PC-9 (cell line): ENCODE measurements at regions of chr14 and their contacts with region 1.

Region 1: DNA sequence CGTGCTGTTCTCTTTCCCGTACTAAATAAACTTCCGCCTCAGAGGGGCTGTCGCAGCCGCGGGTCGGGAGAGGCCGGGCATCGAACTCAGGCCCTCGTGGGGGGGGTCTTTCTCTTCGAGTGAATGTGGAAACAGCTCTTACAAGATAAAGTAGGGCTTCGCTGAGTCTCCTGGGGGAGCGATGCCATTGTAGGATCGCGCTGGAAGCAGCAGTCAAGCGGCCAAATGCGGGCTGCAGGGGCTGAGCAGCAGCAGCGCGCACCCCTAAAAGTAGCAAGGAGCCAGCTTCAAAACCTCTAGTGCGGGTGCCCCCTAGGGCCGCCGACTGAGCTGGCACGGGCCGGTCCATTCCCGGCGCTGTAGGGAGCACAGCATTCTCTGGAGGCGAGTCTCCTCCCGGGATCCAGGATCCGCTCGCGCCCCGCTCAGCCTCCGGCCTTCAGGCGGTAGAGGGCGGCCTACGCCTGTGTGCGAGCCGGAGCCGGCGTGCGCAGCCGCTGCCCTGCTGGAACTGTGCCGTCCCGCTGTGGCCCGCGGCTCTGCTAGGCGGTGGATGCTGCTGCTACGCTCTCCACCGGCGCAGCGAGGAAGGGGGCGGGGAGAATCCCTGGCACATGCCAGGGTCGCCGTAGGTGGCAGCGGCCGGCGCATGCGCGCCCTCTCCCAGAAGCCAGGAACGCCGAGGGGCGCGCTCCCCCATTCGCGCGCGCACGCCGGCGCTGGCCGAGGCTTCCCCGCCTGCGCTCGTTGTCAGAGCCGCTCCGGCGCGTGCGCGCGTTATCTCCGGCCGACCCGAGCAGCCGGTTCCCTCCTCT is at the start of gene FUT8:
- DNase-seq: peak; percentile 89 to 99
- H3K4me3 ChIP-seq: peak within 1 kb of the TSS; percentile 97
- H3K27ac ChIP-seq: peak within 1 kb of the TSS; percentile 90
- H3K4me1 ChIP-seq: peaks cover 40% of the 10 kb centered on the region
- H3K27me3 ChIP-seq: no peaks in the 10 kb centered on the region
- CTCF ChIP-seq: peak; percentile 63
- total RNA-seq, gene FUT8: 134 and 135 TPM in 2 replicates

Region 2: DNA sequence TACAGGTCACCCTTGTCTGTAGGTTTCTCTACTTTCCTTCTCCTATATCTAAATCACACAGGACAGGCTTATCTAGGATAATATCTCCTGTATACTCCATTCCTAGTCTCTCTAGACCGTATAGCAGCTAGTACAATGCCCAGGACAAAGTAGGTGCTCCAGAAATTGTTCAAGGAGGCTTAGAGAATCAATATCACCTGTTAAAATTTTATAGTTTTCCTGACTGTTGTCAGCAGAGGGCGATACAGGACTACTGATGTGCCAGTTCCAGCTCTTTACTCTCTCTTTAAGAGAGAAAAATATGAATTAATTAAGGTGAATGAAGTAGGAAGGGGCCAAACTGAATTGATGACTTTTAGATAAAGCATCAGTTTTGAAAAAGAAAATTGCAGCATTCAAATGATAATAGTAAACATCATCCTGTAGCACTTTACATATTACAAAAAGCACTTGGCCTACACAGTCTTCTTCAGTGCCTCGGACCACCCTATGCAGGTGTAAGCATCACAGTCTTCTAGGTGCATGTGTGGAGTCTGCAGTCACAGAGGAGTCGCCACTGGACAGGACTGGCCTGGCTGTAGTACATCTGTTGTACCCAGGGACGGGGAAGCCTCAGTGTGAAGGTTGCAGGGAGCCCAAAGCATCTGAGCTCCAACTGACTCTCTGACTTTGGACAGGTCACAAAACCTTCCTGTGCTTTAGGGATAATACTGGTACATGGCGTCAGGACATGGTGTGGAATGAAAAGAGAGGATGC is 248.0 kb before region 1 on chr14:
- CTCF ChIA-PET with region 1: interaction called, 7 read pairs
- POLR2A ChIA-PET with region 1: interaction called, 12 read pairs
- intact Hi-C with region 1: loop called (anchors 1 kb)
- DNase-seq: peak; percentile 34 to 55
- H3K4me3 ChIP-seq: no peak overlapping the region
- H3K27ac ChIP-seq: no peak overlapping the region
- H3K4me1 ChIP-seq: peaks cover 17% of the 10 kb centered on the region
- H3K27me3 ChIP-seq: no peaks in the 10 kb centered on the region
- CTCF ChIP-seq: peak; percentile 97

Region 3: GRCh38 chr14:65239143-65239937 is 172.9 kb before region 1 on chr14:
- CTCF ChIA-PET with region 1: interaction called, 7 read pairs
- POLR2A ChIA-PET with region 1: interaction called, 32 read pairs
- intact Hi-C with region 1: loop called (anchors 1 kb)
- DNase-seq: peak; percentile 68 to 91
- H3K4me3 ChIP-seq: peak overlapping the region; percentile 44; the same call in 1 of the 2 replicates
- H3K27ac ChIP-seq: peak overlapping the region; percentile 96
- H3K4me1 ChIP-seq: peaks cover 90% of the 10 kb centered on the region
- H3K27me3 ChIP-seq: no peaks in the 10 kb centered on the region
- CTCF ChIP-seq: no peak

Region 4: GRCh38 chr14:65302571-65303189 is 109.6 kb before region 1 on chr14:
- CTCF ChIA-PET with region 1: interaction called, 13 read pairs
- POLR2A ChIA-PET with region 1: interaction called, 3 read pairs
- intact Hi-C with region 1: no loop called
- DNase-seq: peak; percentile 34 to 73
- H3K4me3 ChIP-seq: no peak overlapping the region
- H3K27ac ChIP-seq: peak overlapping the region; percentile 20
- H3K4me1 ChIP-seq: peaks cover 41% of the 10 kb centered on the region
- H3K27me3 ChIP-seq: no peaks in the 10 kb centered on the region
- CTCF ChIP-seq: no peak

Region 5: GRCh38 chr14:65434214-65434850 is 22.1 kb after region 1 on chr14:
- CTCF ChIA-PET with region 1: interaction called, 10 read pairs
- POLR2A ChIA-PET with region 1: no interaction called
- intact Hi-C with region 1: no loop called
- DNase-seq: peak in 1 of 2 experiments; percentile 32
- H3K4me3 ChIP-seq: no peak overlapping the region
- H3K27ac ChIP-seq: peak overlapping the region; percentile 2; the same call in 1 of the 2 replicates
- H3K4me1 ChIP-seq: peaks cover 20% of the 10 kb centered on the region
- H3K27me3 ChIP-seq: no peaks in the 10 kb centered on the region
- CTCF ChIP-seq: no peak

Region 6: DNA sequence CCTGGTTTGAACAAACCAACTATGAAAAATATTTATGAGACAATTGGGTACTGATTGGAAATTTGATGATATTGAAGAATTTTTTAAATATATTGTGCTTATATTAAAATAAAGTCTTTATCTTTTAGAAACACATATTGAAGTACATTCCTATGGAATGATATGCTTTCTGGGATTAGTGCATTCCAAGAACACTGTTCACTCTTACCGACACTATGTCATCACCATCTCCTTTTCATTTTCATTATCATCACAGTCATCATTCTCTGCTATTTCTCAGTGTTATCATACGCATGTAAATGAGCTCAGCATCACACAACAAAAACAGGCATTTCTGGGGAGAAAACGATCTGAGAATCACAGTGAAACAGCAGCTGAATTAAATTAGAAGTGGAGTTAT is 560.7 kb after region 1 on chr14:
- CTCF ChIA-PET with region 1: interaction called, 11 read pairs
- POLR2A ChIA-PET with region 1: no interaction called
- intact Hi-C with region 1: no loop called
- DNase-seq: no peak
- H3K4me3 ChIP-seq: no peak overlapping the region
- H3K27ac ChIP-seq: no peak overlapping the region
- H3K4me1 ChIP-seq: no peaks in the 10 kb centered on the region
- H3K27me3 ChIP-seq: 0 out of 2 replicates have a peak, but pooled peaks cover 6% of the 10 kb centered on the region
- CTCF ChIP-seq: no peak